ENCODE measurements at regions of chr19 and their contacts with region 1.

Region 1: DNA sequence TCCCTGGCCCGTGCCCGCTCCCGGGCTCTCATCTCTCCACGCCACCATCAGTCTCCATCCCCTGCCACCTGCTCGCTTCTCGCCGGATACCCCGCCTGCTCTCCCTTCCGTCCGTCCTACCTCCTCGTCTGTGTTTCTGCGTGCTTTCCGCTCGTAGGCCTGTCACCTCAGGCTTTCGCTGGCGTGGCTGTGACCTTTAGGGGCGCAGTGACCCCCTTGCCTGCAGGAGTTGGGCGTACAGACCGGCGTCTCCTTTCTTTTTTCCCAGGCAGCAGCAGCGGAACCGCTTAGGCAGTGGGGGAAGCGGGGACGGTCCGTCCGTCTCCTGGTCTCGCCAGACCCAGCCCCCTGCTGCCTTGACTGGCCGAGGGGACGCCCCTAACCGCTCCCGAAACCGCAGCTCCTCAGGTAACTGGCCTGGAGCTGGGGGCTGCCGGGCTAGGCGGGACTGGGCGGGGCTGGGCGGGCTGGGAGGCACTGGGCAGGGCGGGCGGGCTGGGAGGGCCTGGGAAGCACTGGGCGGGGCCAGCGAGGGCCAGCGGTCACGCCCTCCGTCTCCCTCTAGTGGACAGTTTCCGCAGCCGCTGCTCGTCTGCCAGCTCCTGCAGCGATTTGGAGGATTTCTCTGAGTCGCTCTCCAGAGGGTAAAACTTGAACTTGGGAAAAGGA is 6.3 kb downstream of the PGLYRP1 start:
- DNase-seq: peak; percentile 57 to 84 (median 75)
- ATAC-seq: peak; percentile 92
- H3K4me3 ChIP-seq: peak overlapping the region; percentile 62
- H3K4me3 Mint-ChIP-seq: peak overlapping the region; percentile 85 to 97 (median 92)
- H3K27ac ChIP-seq: peak overlapping the region; percentile 55
- H3K27ac Mint-ChIP-seq: peak overlapping the region in 7 of 9 donors; percentile 28 to 82 (median 50)
- H3K4me1 ChIP-seq: peaks cover 0 to 7% of the 10 kb centered on the region in 2 donors
- H3K4me1 Mint-ChIP-seq: peaks cover 11 to 23% (median 18%) of the 10 kb centered on the region in 7 donors
- H3K27me3 ChIP-seq: peaks cover 0 to 6% of the 10 kb centered on the region in 2 donors
- H3K27me3 Mint-ChIP-seq: peaks cover 5 to 17% (median 12%) of the 10 kb centered on the region in 5 donors

Region 2: DNA sequence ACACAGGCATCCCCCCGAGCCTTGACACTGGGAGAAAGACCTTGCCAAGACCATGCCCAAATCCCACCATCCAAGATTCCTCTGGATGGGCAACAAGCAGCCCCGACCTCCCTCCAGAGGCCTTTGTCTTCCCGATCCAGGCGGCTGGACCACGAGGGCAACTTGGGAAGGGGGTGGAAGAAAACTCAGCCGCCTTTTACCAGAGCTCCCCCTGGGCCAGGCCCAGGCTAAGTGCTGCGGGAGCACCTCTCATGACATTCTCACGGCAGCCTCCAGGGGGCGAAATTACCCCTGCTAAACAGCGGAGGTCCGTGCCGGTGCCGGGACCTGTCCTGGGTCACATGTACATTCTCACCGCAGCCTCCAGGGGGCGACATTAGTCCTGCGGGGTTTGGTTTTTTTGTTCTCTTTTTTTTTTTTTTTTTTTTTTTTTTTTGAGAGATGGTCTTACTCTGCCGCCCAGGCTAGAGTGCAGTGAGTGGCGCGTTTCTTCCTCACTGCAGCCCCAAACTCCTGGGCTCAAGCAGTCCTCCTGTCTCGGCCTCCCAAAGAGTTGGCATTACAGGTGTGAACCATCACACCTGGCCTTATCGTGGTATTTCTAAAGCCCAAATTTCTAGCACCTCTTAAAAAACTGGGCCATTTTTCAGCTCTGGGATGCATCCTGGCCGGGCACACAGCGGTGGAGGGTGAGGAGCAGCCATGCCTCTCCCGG is 199.4 kb before region 1 on chr19:
- CTCF ChIA-PET with region 1: no interaction called
- POLR2A ChIA-PET with region 1: no interaction called
- intact Hi-C with region 1: loop called in 1 of 2 experiments (anchors 1 kb)
- DNase-seq: peak; percentile 88 to 96 (median 93)
- ATAC-seq: peak; percentile 100
- H3K4me3 ChIP-seq: no peak overlapping the region
- H3K4me3 Mint-ChIP-seq: peak overlapping the region in 5 of 10 donors; percentile 16 to 54 (median 45)
- H3K27ac ChIP-seq: no peak overlapping the region
- H3K27ac Mint-ChIP-seq: peak overlapping the region in 7 of 9 donors; percentile 25 to 93 (median 42)
- H3K4me1 ChIP-seq: peaks cover 0 to 4% of the 10 kb centered on the region in 2 donors
- H3K4me1 Mint-ChIP-seq: peaks cover 0 to 7% (median 5%) of the 10 kb centered on the region in 7 donors
- H3K27me3 ChIP-seq: no peaks in the 10 kb centered on the region
- H3K27me3 Mint-ChIP-seq: peaks cover 0 to 20% (median 17%) of the 10 kb centered on the region in 5 donors

Region 3: DNA sequence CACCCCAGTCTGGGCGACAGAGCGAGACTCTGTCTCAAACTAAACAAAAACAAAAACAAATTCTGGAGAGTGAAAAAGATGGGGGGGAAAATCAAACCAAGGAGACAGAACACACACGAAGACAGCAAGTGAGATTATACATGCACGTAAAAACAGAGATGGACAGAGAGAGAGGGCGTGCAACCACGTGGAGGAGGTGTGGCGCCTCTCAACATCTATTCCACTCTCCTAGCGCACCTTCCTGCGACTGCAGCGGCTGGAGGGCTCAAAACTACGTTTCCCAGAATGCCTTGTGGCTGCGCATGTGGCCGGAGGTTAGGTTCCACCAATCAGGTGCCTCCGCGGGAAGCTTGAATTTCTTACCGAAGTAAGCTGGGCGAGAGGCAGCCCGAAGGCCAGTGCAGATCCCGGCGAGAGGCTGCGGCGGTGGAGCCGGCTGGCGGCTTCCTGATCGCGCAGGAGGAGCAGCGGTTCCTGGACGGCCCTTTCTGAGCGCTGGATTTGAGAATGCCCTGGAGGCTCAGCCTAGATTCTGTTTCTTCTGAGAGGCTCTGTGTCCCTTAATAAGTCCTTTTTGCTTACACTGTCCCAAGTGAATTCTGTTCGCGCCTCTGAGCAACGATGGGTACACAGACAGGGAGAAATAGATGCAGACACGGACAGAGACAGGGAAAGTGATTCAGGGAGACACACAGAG is 88.8 kb before region 1 on chr19:
- CTCF ChIA-PET with region 1: interaction called, 3 read pairs
- POLR2A ChIA-PET with region 1: no interaction called
- intact Hi-C with region 1: loop called (anchors 2 to 5 kb)
- DNase-seq: peak; percentile 66 to 89 (median 87)
- ATAC-seq: peak; percentile 99
- H3K4me3 ChIP-seq: no peak overlapping the region
- H3K4me3 Mint-ChIP-seq: peak overlapping the region in 7 of 10 donors; percentile 10 to 86 (median 55)
- H3K27ac ChIP-seq: no peak overlapping the region
- H3K27ac Mint-ChIP-seq: peak overlapping the region in 4 of 9 donors; percentile 28 to 60 (median 42)
- H3K4me1 ChIP-seq: peaks cover 4 to 5% of the 10 kb centered on the region in 2 donors
- H3K4me1 Mint-ChIP-seq: peaks cover 4 to 23% (median 6%) of the 10 kb centered on the region in 7 donors
- H3K27me3 ChIP-seq: no peaks in the 10 kb centered on the region
- H3K27me3 Mint-ChIP-seq: peaks cover 0 to 15% (median 9%) of the 10 kb centered on the region in 5 donors

Region 4: DNA sequence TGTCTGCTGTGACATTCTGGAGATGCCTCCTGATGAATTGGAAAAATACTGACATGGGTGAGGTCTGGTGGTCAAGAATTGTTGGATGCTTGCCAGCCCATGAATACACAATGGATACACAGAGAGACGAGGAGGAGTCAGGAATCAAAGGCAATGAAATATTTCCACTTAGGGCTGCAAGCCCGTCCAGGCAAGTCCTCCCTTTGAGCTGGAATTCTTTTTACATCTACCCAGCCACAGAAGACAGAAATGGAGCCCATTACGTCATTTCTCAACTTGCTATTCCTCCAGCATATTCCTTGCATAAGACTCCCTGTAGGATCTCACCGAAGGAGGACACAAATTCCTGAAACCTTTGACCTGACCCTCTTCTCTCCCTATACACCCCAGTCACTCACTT is 40.0 kb after region 1 on chr19:
- CTCF ChIA-PET with region 1: no interaction called
- POLR2A ChIA-PET with region 1: no interaction called
- intact Hi-C with region 1: no loop called
- DNase-seq: no peak
- ATAC-seq: no peak
- H3K4me3 ChIP-seq: no peak overlapping the region
- H3K4me3 Mint-ChIP-seq: no peak overlapping the region
- H3K27ac ChIP-seq: no peak overlapping the region
- H3K27ac Mint-ChIP-seq: no peak overlapping the region
- H3K4me1 ChIP-seq: no peaks in the 10 kb centered on the region
- H3K4me1 Mint-ChIP-seq: no peaks in the 10 kb centered on the region
- H3K27me3 ChIP-seq: no peaks in the 10 kb centered on the region
- H3K27me3 Mint-ChIP-seq: peaks cover 48 to 75% (median 55%) of the 10 kb centered on the region in 5 donors

Measured in naive thymus-derived CD4-positive, alpha-beta T cell (primary cell).